ENCODE measurements at regions of chr1 and their contacts with region 1.

Region 1: GRCh38 chr1:10108134-10108663 is 75.4 kb downstream of the UBE4B start:
- DNase-seq: peak; percentile 64

Region 2: GRCh38 chr1:9900142-9901043 is 207.8 kb before region 1 on chr1:
- in situ Hi-C with region 1: no loop called
- DNase-seq: peak; percentile 74

Region 3: GRCh38 chr1:10074059-10074851 is 33.9 kb before region 1 on chr1:
- in situ Hi-C with region 1: loop called (anchors 5 kb)
- DNase-seq: peak; percentile 32